ENCODE measurements at regions of chr12 and their contacts with region 1.

Region 1: DNA sequence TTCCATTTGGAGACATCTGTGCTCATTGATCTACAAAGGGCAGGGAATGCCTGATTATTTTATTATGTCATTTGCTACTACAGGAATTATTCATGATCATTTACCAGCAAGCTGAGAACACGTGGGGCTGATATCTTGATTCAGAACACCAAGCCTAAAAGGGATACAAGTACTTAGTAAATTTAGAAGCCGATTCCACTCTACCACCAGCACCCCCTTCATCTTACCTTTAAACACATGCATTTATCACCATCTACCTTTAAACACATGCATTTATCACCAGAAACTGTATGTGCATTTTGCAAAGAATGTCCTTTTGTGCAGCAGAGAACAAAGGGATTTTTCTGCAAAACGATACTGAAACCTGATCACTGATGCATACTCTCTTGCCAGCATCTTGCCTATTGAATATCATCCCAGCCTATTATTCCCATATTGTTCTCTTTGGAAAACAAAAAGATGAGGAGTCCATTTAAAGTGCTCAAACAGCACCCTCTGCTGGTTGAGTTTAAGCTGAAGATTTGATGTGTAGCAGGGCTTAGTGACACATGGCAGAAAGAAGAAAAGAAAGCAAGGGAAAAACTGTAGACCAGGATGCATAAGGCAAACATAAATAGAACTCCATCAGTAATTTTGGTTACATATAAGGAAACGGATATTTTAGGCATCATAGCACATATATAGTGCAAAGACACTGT is 132.6 kb upstream of the PLEKHG7 start:
- DNase-seq: peak; percentile 85
- H3K4me3 ChIP-seq: peak overlapping the region; percentile 22
- H3K27ac ChIP-seq: peak overlapping the region; percentile 26
- H3K4me1 ChIP-seq: peaks cover 40% of the 10 kb centered on the region
- CTCF ChIP-seq: peak; percentile 100

Region 2: DNA sequence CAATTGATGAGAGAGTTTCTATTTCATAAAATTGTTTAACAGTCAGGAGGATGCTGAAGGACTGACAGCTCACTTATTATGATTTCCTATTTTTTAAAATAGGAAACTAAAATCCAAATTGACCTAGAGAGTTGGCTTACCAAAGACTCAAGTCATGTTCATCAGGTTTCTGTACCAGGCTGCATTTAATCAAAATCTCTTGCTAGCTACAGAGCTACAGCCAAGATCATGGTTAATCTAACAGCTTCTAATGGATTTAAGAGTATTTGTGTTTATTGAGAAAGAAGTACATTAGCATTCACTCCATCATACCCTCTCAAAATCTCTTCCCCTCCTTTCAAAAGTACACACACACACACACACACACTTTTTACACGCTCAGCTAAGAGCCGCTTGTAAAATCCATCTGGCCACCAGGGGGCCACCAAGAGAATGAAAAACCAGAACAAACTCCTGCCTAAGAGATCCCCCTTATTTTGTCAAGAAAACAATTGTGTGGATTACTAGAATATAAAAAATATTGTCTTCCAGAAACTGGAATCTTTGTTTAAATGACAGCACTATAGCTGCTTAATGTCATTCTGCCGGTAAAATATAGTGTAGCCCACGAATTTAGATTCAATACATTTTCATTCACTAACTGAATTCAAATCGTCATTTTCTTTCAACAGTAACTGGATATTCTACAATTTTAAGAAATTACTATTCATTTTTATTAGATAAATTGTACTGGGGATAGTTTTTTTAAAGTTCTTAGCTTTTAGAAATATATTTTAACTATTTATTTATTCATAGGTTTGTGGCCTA is 758.5 kb before region 1 on chr12:
- CTCF ChIA-PET with region 1: no interaction called
- POLR2A ChIA-PET with region 1: no interaction called
- intact Hi-C with region 1: loop called (anchors 1 kb)
- DNase-seq: peak; percentile 66
- H3K4me3 ChIP-seq: no peak overlapping the region
- H3K27ac ChIP-seq: no peak overlapping the region
- H3K4me1 ChIP-seq: no peaks in the 10 kb centered on the region
- CTCF ChIP-seq: peak; percentile 97

Region 3: DNA sequence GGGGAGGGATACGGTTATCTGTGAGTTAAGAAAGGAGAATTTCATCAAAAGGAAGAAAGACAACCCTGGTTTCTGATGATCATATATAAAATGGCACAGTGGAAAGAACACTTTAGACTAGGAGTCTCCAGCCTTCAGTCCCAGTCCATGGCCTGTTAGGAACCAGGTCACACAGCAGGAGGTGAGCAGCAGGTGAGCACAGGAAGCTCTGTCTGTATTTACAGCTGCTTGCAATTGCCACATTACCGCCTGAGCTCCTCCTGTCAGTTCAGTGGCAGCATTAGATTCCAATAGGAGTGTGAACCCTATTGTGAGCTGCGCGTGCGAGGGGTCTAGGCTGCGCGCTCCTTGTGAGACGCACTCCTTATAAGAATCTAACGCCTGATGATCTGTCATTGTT is 562.4 kb before region 1 on chr12:
- CTCF ChIA-PET with region 1: no interaction called
- POLR2A ChIA-PET with region 1: no interaction called
- intact Hi-C with region 1: loop called (anchors 1 kb)
- DNase-seq: no peak
- H3K4me3 ChIP-seq: no peak overlapping the region
- H3K27ac ChIP-seq: no peak overlapping the region
- H3K4me1 ChIP-seq: peaks cover 11% of the 10 kb centered on the region
- CTCF ChIP-seq: no peak

Region 4: GRCh38 chr12:92466391-92467305 is 103.6 kb before region 1 on chr12:
- CTCF ChIA-PET with region 1: no interaction called
- POLR2A ChIA-PET with region 1: interaction called, 11 read pairs
- intact Hi-C with region 1: loop called (anchors 1 kb)
- DNase-seq: peak; percentile 92
- H3K4me3 ChIP-seq: peak overlapping the region; percentile 70
- H3K27ac ChIP-seq: peak overlapping the region; percentile 98
- H3K4me1 ChIP-seq: peaks cover 83% of the 10 kb centered on the region
- CTCF ChIP-seq: no peak; the same call in 1 of the 2 replicates

Measured in OCI-LY7 (cell line).